ENCODE measurements at regions of chr9 and their contacts with region 1.

Region 1: GRCh38 chr9:86486891-86487837 is 133.0 kb upstream of the TUT7 start:
- DNase-seq: peak; percentile 26
- H3K4me3 ChIP-seq: no peak overlapping the region
- CTCF ChIP-seq: peak; percentile 49

Region 2: DNA sequence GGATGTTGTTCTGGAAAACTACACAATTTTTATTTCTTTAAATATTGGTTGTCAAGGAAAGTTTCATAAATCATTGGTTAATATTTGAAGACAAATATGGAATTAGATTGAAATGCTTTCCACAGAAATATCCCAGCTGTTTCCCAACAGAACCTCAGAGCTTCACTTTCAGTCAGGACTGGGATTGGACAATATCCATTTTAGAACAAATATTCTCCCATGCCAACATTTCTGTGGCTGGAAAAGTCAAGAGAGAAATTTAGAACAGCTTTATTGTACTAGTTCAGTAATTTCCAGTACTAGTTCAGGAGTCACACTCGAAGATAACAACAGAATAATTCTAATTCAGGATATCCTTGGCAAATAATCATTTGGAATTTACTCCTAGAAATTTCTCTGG is 16.8 kb before region 1 on chr9:
- CTCF ChIA-PET with region 1: interaction called, 11 read pairs
- POLR2A ChIA-PET with region 1: no interaction called
- DNase-seq: no peak
- H3K4me3 ChIP-seq: no peak overlapping the region
- CTCF ChIP-seq: no peak

Region 3: DNA sequence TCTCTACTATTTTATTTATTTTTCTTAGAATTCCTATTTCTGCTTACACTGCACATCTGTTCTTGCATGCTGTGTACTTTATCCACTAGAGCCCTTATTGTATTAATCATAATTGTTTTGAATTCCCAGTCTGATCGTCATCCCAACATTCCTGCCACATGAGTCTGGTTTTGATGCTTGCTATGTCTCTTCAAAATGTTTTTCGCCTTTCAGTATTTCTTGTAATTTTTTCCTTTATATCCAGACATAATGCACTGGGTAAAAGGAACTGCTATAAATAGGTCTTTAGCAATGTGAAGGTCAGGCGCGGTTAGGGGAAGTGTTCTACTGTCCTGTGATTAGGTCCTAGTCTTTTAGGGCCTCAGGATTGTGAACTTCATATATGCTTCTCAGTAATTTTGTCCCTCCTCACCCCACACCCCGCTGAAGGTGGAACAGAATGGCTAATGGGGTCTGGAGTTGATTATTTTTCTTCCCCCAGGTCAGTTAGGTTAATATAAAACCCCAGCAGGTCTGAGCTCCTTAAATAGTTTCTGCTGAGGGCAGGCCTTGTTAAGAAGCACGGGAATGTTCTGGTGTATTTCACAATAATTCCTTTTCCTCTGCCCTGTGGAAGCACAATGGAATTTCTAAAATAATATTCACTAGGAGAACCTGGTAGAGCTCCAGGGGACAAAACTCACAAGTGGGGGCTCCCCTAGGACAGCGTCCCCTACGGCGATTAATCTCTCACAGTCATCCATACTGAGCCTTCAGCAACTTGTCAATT is 13.7 kb after region 1 on chr9:
- CTCF ChIA-PET with region 1: interaction called, 10 read pairs
- POLR2A ChIA-PET with region 1: no interaction called
- DNase-seq: peak; percentile 72
- H3K4me3 ChIP-seq: no peak overlapping the region
- CTCF ChIP-seq: no peak

Region 4: GRCh38 chr9:86637515-86637914 is 150.4 kb after region 1 on chr9:
- CTCF ChIA-PET with region 1: interaction called, 16 read pairs
- POLR2A ChIA-PET with region 1: no interaction called
- DNase-seq: no peak
- H3K4me3 ChIP-seq: no peak overlapping the region
- CTCF ChIP-seq: peak; percentile 83

Region 5: DNA sequence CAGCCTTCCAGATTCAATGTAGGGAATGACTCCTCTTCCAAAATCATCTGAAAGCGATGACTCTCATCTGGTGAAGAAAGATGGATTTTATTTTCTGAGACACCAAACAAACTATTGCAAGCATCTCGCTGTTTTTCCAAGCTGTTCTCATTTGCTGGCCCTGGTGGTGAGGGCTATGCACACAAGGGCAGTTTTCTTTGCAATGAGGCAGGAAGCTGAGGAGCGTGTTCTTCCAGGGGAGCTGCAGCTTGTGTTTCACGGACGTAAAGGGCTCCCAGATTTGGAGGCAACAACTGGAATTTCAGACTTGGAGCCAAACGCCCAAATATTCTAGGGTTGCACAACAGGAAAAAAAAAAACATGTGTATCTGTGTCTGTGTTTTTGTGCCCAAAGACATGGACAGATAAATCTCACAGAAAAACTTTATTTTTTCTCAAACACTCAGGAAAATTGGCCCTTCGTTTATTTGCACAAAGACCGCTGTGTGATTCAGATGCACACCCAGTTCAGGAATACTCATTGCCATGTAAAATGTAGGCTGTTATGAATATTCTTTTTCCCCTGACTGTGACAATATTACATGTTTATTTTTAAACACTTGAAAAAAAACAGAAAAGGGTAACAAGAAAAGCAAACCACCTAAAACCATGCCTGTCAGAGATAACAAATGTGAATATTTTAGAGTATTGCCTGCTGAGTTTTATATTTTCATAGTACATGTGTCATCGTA is 308.8 kb after region 1 on chr9:
- CTCF ChIA-PET with region 1: interaction called, 16 read pairs
- POLR2A ChIA-PET with region 1: no interaction called
- DNase-seq: peak; percentile 86
- H3K4me3 ChIP-seq: peak overlapping the region; percentile 34; the same call in 1 of the 2 replicates
- CTCF ChIP-seq: peak; percentile 59

Region 6: DNA sequence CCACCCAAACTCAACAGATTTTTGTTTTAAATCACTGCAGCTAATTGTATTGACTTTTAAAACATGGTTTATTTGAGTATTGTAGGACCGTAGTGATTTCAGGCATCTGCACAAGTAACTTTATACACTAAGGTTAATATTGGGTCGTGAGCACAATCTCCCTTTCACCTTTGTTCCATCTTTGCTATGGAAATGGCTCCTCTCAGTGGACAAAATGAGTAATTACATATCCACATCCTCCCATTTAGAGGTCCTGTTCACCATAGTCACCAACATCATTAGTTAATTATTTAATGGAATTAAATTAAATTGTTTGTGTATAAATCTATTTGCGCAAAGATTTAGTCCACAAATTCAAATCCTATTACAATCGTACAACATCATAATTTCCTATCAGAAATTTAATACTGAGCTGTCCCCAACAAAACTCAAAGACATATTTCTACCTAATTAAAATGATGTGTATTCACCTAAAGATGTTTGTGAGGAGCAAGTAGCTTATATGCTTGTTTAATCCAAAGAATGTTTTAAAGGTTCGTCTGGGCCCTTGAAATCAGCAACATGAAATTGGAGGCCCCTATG is 837.5 kb after region 1 on chr9:
- CTCF ChIA-PET with region 1: interaction called, 79 read pairs
- POLR2A ChIA-PET with region 1: no interaction called
- DNase-seq: no peak
- H3K4me3 ChIP-seq: no peak overlapping the region
- CTCF ChIP-seq: peak; percentile 48